ENCODE measurements at regions of chr18 and their contacts with region 1.

Region 1: GRCh38 chr18:63578357-63578958 is 8.7 kb upstream of the SERPINB13 start:
- H3K4me3 ChIP-seq: no peak overlapping the region
- H3K27ac ChIP-seq: no peak overlapping the region
- H3K4me1 ChIP-seq: 0 out of 2 replicates have a peak, but pooled peaks cover 2% of the 10 kb centered on the region
- CTCF ChIP-seq: peak; percentile 67; the same call in 1 of the 2 replicates

Region 2: DNA sequence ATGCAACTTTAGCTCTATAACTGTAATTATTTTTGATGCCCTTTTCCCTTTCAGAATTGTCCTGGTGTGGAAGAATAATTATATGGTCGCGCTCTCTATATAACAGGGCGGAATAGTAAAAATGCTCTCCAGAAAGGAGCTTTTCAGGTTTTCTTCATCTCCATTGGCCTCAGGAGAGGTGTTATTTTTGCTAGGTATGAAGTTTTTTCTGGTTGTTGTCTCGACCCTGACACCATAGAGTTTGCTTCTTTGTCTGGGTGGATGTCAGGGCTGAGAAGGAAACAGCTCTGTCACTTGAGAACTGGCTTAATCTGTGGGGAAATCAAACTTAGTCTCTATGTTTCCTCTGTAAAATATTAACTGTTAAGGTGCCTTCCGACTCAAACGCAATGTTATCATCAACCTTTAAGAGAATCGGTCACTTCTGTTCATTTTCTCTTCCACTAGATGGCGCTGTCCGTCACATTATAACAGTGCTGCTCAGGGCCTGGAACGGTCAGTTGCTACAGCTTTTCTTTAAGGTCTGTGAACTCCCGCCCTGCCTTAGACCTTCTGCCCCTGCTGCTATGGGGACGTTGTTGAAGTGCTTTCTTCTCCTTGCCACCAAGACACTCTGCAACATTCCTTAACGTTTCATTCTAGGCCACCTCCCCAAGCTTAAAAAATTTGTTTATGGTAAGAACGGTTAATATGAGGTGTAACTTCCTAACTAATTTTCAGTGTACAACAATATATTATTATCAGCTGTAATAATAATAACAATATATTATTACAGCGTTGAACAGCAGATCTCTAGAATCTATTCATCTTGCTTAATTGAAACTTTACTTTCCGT is 60.1 kb before region 1 on chr18:
- CTCF ChIA-PET with region 1: interaction called, 338 read pairs
- POLR2A ChIA-PET with region 1: no interaction called
- H3K4me3 ChIP-seq: no peak overlapping the region
- H3K27ac ChIP-seq: no peak overlapping the region
- H3K4me1 ChIP-seq: peaks cover 3% of the 10 kb centered on the region; the same call in 1 of the 2 replicates
- CTCF ChIP-seq: peak; percentile 81

Region 3: GRCh38 chr18:63553117-63553516 is 25.3 kb before region 1 on chr18:
- CTCF ChIA-PET with region 1: interaction called, 21 read pairs
- POLR2A ChIA-PET with region 1: no interaction called
- H3K4me3 ChIP-seq: no peak overlapping the region
- H3K27ac ChIP-seq: no peak overlapping the region
- H3K4me1 ChIP-seq: no peaks in the 10 kb centered on the region
- CTCF ChIP-seq: no peak

Region 4: DNA sequence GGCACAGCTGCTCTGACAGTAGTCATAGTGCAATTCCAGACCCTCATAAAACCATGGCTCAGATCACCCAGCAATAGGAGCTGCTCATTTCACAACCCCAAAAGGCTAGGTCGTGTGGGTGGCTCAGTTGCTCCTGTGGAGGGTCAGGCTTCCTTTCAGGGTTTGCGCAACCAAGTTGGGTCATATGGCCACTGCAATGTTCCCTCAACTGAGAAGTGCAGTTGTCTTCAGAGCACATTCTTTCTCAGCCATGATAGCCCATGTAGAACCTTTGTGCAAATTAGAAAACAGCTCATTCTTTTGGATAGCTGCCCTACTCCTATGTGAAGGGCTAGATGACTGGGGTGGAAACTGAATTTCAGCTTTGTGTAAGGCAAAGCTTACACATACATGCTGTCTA is 11.9 kb after region 1 on chr18:
- CTCF ChIA-PET with region 1: interaction called, 19 read pairs
- POLR2A ChIA-PET with region 1: no interaction called
- H3K4me3 ChIP-seq: no peak overlapping the region
- H3K27ac ChIP-seq: no peak overlapping the region
- H3K4me1 ChIP-seq: no peaks in the 10 kb centered on the region
- CTCF ChIP-seq: no peak

Region 5: GRCh38 chr18:63848159-63848558 is 269.7 kb after region 1 on chr18:
- CTCF ChIA-PET with region 1: interaction called, 14 read pairs
- POLR2A ChIA-PET with region 1: no interaction called
- H3K4me3 ChIP-seq: no peak overlapping the region
- H3K27ac ChIP-seq: no peak overlapping the region
- H3K4me1 ChIP-seq: no peaks in the 10 kb centered on the region
- CTCF ChIP-seq: 0 out of 2 replicates have a peak, but pooled peaks have one; percentile 7

Measured in HEK293 (cell line).